Ovary (tissue), 10 donors: ENCODE measurements at regions of chr2 and their contacts with region 1.

Region 1: DNA sequence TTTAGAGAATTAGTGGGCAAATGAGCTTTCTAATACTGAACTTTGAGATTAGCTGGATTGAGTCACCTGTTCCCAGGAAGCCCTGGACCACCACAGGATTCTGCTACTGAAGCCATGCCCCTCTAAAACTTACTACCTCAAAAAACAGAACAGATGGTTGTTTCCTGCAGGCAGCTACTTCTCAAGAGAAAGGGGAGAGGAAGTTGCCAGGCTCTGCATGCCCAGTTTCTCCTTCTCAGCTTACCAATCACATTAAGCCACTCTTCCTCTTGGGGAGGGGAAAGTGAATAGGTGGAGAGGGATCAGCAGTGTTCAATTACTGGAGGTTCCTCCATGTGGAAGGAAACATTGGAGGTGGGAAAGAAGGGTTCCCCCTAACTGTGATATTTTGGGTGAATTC is 24.9 kb upstream of the C1GALT1C1L start:
- DNase-seq: no peak
- H3K4me3 ChIP-seq: no peak overlapping the region
- H3K27ac ChIP-seq: no peak overlapping the region
- H3K4me1 ChIP-seq: peaks cover 3% of the 10 kb centered on the region
- H3K27me3 ChIP-seq: no peaks in the 10 kb centered on the region
- CTCF ChIP-seq: no peak
- EP300 ChIP-seq: no peak
- POLR2A ChIP-seq: no peak

Region 2: GRCh38 chr2:43724728-43725526 is 23.8 kb after region 1 on chr2:
- intact Hi-C with region 1: loop called in 1 of 4 experiments (anchors 1 kb)
- DNase-seq: peak in 1 of 5 donors; percentile 18
- H3K4me3 ChIP-seq: no peak overlapping the region
- H3K27ac ChIP-seq: peak overlapping the region; percentile 57 to 78
- H3K4me1 ChIP-seq: peaks cover 3% of the 10 kb centered on the region
- H3K27me3 ChIP-seq: no peaks in the 10 kb centered on the region
- CTCF ChIP-seq: no peak
- EP300 ChIP-seq: no peak
- POLR2A ChIP-seq: no peak